ENCODE measurements at regions of chr1 and their contacts with region 1.

Region 1: DNA sequence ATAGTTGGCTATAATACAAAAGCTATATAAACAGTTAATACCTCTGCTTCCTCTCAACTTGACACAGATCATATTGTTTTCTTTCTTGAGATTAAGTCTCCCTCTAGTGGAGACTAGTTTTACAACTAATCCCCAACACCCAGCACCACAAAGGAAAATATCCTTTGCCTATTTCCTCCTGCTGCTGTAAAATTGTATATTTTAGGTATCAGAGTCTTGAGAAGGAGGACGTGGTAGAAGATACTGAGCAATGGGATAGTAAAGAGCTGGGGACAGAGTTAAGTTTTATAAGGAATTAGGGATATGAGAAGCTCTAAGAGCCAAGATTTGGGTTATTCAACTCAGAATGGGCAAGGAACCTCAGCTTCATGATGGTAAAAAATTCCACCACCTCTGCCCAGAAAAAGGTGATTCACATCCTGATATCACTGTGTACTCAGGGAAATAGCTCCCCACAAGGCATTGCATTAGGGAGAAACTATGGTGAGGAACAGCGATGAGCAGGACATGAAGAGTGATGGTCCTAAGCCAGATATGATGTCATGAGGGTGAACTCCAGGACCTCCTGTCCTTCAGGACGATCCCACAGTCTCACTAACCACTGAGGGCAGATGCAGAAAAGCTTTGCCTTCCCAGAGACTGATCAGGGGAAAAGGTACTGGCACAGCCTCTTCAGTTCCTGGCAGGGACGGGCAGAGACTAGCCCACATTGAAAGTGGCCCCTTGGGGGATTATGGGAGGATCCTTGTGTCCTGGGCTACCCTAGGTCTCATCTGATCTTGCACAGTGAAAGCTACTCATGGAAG is 14.7 kb upstream of the CFAP126 start:
- DNase-seq: peak; percentile 81
- ATAC-seq: peak; percentile 93
- H3K4me3 ChIP-seq: no peak overlapping the region
- H3K27ac ChIP-seq: no peak overlapping the region
- H3K4me1 ChIP-seq: no peaks in the 10 kb centered on the region
- H3K27me3 ChIP-seq: no peaks in the 10 kb centered on the region
- CTCF ChIP-seq: peak; percentile 69
- POLR2A ChIP-seq: no peak
- RAD21 ChIP-seq: peak; percentile 62

Region 2: GRCh38 chr1:161192476-161193465 is 189.6 kb before region 1 on chr1:
- CTCF ChIA-PET with region 1: no interaction called
- POLR2A ChIA-PET with region 1: no interaction called
- dilution Hi-C with region 1: no loop called
- in situ Hi-C with region 1: no loop called
- intact Hi-C with region 1: loop called (anchors 1 kb)
- DNase-seq: peak; percentile 65
- ATAC-seq: peak; percentile 92
- H3K4me3 ChIP-seq: no peak overlapping the region
- H3K27ac ChIP-seq: no peak overlapping the region
- H3K4me1 ChIP-seq: peaks cover 11% of the 10 kb centered on the region
- H3K27me3 ChIP-seq: no peaks in the 10 kb centered on the region
- CTCF ChIP-seq: peak; percentile 91
- POLR2A ChIP-seq: no peak
- RAD21 ChIP-seq: peak; percentile 80

Region 3: DNA sequence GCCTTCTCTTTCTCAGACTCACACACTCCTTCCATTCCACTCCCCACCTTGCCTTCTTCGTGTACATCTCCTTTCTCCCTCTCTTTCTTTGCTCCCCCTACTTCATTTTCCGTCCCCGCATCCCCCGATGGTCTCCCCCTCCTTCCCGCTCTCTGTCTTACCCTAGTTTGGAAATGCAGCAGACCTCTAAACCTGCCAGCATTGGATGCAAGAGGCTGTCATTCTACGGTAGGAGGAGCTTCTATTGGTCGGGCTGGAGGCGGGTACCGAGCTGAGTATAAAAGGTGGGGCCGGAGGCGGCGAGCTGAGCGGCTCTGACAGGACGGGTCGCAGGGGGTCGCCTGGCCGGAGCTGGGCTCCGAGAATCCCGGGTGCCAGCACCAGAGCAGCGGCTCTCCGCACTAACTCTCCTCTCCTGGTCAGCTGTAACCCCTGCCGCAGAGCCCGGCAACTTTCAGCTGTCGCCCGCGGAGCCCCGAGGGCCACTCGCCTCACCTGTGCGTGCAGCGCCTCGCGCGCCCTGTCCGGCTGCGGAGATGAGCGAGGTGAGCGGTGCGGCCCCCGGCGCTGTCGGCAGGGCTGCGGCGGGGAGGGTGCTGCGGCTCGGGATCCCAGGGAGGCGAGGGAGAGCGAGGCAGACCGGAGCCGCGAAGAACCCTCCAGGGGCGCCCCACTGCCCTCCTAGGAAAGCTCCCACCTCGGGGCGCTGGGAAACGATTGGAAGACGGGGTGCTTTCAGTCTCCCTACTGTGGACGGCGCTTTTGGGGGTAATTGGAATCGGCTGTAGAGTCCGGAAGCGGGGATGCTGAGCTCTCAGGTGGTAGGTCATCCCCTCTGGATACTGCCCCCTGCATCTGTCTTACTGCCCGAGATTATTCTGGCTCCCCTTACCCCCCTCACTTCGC is 123.7 kb before region 1 on chr1 and contains the start of gene PCP4L1:
- CTCF ChIA-PET with region 1: no interaction called
- POLR2A ChIA-PET with region 1: no interaction called
- dilution Hi-C with region 1: no loop called
- in situ Hi-C with region 1: no loop called
- intact Hi-C with region 1: no loop called
- DNase-seq: peak; percentile 33
- ATAC-seq: peak; percentile 91
- H3K4me3 ChIP-seq: peak within 1 kb of the TSS; percentile 21; the same call in 1 of the 2 replicates
- H3K27ac ChIP-seq: no peak within 1 kb of the TSS
- H3K4me1 ChIP-seq: no peaks in the 10 kb centered on the region
- H3K27me3 ChIP-seq: peaks cover 38% of the 10 kb centered on the region
- CTCF ChIP-seq: no peak
- POLR2A ChIP-seq: no peak
- RAD21 ChIP-seq: no peak
- total RNA-seq, gene PCP4L1: not detected in 2 replicates

Region 4: GRCh38 chr1:161399257-161399998 is 17.0 kb after region 1 on chr1:
- CTCF ChIA-PET with region 1: no interaction called
- POLR2A ChIA-PET with region 1: interaction called, 10 read pairs
- dilution Hi-C with region 1: no loop called
- in situ Hi-C with region 1: no loop called
- intact Hi-C with region 1: no loop called
- DNase-seq: peak; percentile 91
- ATAC-seq: peak; percentile 94
- H3K4me3 ChIP-seq: peak overlapping the region; percentile 70
- H3K27ac ChIP-seq: peak overlapping the region; percentile 83
- H3K4me1 ChIP-seq: no peaks in the 10 kb centered on the region
- H3K27me3 ChIP-seq: no peaks in the 10 kb centered on the region
- CTCF ChIP-seq: peak; percentile 45
- POLR2A ChIP-seq: peak; percentile 83
- RAD21 ChIP-seq: peak; percentile 23; the same call in 1 of the 2 replicates

Measured in IMR-90 (cell line).